Activated CD4-positive, alpha-beta memory T cell treated with anti-CD3 and anti-CD28 coated beads, Interleukin-2, amount 10 ng/mL, durations not matched to agents 7 days and 5 days (primary cell): ENCODE measurements at regions of chr12 and their contacts with region 1.

Region 1: GRCh38 chr12:30847259-30847658 is 79.3 kb upstream of the TSPAN11 start:
- DNase-seq: peak; percentile 20
- H3K4me3 Mint-ChIP-seq: no peak overlapping the region
- H3K27ac Mint-ChIP-seq: no peak overlapping the region
- H3K4me1 Mint-ChIP-seq: peaks cover 6% of the 10 kb centered on the region
- H3K27me3 Mint-ChIP-seq: peaks cover 2% of the 10 kb centered on the region

Region 2: GRCh38 chr12:30965613-30965985 is 118.3 kb after region 1 on chr12:
- CTCF ChIA-PET with region 1: no interaction called
- POLR2A ChIA-PET with region 1: no interaction called
- DNase-seq: no peak
- H3K4me3 Mint-ChIP-seq: no peak overlapping the region
- H3K27ac Mint-ChIP-seq: no peak overlapping the region
- H3K4me1 Mint-ChIP-seq: no peaks in the 10 kb centered on the region
- H3K27me3 Mint-ChIP-seq: peaks cover 5% of the 10 kb centered on the region

Region 3: DNA sequence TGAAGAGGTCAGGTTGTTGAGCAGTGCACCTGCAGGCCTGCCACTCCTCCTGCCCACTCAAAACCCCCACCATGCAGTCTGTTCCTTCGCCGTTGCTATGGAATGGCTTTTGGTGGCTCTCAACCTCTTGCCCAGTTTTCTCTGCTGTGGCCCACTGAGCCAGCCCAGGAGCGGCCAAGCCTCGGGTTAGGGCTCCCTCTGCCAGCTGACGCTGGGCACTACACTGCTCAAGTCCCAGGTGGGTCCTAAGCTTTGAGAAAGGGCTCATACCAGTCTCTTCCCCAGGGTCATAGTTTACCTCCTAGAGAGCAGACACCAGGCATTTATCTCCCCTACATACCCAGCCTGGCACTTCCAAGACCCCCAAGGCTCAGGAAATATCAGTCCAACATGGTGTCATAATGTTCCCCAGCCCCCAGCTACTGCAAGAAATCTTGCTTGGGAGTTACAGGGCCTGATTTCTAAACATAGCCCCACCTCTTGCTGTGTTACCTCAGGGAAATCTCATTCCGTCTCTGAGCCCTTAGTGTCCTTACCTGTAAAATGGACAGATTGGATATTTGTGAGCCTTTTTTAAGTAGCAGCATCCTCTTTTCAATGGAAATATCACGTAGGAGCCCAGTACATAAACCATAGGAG is 138.7 kb after region 1 on chr12:
- CTCF ChIA-PET with region 1: interaction called, 35 read pairs
- POLR2A ChIA-PET with region 1: no interaction called
- DNase-seq: peak; percentile 24
- H3K4me3 Mint-ChIP-seq: no peak overlapping the region
- H3K27ac Mint-ChIP-seq: no peak overlapping the region
- H3K4me1 Mint-ChIP-seq: no peaks in the 10 kb centered on the region
- H3K27me3 Mint-ChIP-seq: no peaks in the 10 kb centered on the region

Region 4: GRCh38 chr12:31238764-31239387 is 391.6 kb after region 1 on chr12:
- CTCF ChIA-PET with region 1: interaction called, 43 read pairs
- POLR2A ChIA-PET with region 1: no interaction called
- DNase-seq: peak; percentile 75
- H3K4me3 Mint-ChIP-seq: no peak overlapping the region
- H3K27ac Mint-ChIP-seq: no peak overlapping the region
- H3K4me1 Mint-ChIP-seq: peaks cover 14% of the 10 kb centered on the region
- H3K27me3 Mint-ChIP-seq: peaks cover 36% of the 10 kb centered on the region